ENCODE measurements at regions of chr6 and their contacts with region 1.

Region 1: DNA sequence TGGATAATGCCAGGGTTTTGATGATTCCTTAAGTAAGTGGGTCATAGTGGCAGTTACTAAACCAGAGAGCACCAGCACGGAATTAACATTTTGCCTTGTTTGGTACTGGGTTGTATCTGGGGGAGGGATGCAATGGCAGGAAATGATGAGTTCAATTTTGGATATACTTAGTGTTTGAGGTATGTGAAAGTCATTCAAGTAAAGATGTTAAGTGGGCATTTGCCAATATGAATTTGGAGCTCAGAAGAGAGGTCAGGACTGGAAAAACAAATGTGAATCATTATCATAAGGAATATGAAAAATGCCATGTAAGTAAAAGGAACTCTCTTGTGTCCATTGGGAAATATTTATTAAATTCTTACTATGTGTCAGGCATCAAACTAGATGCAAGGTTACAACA is 6.2 kb downstream of the PXT1 start:
- DNase-seq: peak; percentile 94
- H3K4me3 ChIP-seq: no peak overlapping the region
- CTCF ChIP-seq: no peak

Region 2: DNA sequence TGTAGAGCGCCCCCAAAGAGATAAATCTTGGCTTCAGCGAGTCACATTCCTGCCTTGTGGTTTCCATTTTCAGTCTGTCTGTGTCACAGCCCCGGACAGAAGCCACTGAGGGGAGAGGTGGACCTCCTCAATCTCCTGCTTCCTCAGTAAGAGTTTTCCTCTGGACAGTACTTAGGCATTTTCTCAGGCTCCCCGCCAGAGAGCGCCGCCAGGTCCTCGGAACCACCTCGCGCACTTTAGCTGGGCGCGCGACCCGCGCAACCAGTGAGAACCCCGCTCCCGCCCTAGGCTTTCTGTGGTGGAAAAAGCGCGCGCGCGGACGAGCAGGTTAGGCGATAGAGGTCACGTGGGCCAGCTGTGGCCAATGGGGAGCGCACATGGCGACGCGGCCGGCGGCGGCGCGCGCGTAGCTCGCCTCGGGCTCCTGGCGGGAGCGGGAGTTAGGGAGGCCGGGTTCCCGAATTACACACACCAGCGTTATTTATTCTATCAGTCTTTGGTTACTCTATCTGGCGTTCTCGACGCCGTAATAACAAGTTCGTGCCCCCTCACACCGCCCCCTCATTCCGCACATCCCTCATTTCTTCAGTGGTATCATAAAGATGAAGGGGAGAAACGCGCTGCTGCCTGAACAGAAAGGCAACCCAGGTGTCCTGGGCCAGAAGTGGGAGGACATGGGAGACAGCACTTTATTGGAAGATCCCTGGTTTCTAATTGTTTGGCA is 13.2 kb before region 1 on chr6:
- CTCF ChIA-PET with region 1: interaction called, 10 read pairs
- POLR2A ChIA-PET with region 1: interaction called, 4 read pairs
- DNase-seq: peak; percentile 76
- H3K4me3 ChIP-seq: peak overlapping the region; percentile 65
- CTCF ChIP-seq: peak; percentile 75

Measured in AG04449 (cell line).